ENCODE measurements at regions of chr6 and their contacts with region 1.

Region 1: GRCh38 chr6:110815217-110816109 is at the start of gene CDK19:
- DNase-seq: peak; percentile 97
- ATAC-seq: peak; percentile 92
- H3K4me3 ChIP-seq: peak within 1 kb of the TSS; percentile 65 to 94 (median 82)
- H3K27ac ChIP-seq: peak within 1 kb of the TSS; percentile 89 to 95 (median 91)
- H3K4me1 ChIP-seq: peaks cover 6 to 13% of the 10 kb centered on the region in 2 donors
- H3K27me3 ChIP-seq: no peaks in the 10 kb centered on the region
- CTCF ChIP-seq: no peak
- POLR2A ChIP-seq: peak; percentile 72 to 75
- total RNA-seq, gene CDK19: 3.0 to 7.4 (median 6.3) TPM

Region 2: DNA sequence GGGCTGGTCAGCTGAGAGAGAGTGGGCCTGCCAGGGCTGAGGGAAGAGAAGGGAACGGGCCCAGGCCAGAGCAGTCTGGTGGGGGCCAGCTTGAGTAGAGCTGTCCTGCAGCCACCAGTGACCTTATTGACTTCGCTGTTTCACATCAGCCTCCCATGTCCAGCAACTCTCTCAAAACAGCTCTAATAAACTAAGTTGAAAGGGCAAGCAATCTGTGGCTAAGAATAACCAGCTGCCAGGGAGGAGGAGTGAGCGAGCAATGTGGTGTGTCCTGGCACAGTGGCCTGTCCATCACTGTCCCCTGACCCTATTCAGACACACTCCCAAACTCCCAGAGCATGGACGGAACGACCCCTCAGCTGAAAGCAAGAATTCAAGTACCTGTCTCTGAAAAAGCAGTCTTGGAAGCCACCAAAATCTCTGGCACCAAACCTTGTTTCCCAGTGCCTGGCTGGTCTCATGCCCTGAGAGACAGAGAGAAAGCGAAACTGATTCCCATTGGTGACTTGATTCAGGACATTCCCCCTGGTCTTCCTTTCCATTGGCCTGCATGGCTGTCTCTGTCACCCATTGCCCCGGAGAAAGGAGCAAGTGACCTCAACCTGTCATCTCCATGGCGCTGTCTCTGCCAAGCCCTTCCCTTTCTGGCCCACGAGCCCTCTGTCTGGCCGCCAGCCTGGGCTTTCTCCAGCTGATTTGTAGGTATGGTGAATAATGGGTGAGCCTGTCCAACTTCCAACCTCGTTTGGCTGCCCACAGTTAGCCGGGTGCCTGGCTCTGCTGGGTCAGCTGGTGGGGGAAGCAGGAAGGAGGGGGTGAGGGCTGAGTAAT is 400.2 kb before region 1 on chr6 and contains the start of gene DDO:
- in situ Hi-C with region 1: no loop called
- intact Hi-C with region 1: loop called (anchors 1 kb)
- DNase-seq: peak; percentile 82 to 96
- ATAC-seq: peak; percentile 98 to 99
- H3K4me3 ChIP-seq: peak within 1 kb of the TSS; percentile 55 to 73 (median 66)
- H3K27ac ChIP-seq: peak within 1 kb of the TSS; percentile 83 to 93 (median 92)
- H3K4me1 ChIP-seq: peaks cover 14 to 16% of the 10 kb centered on the region in 2 donors
- H3K27me3 ChIP-seq: no peaks in the 10 kb centered on the region
- CTCF ChIP-seq: no peak
- POLR2A ChIP-seq: no peak
- total RNA-seq, gene DDO: 1.8 to 3.5 (median 2.4) TPM

Region 3: GRCh38 chr6:110873981-110874879 is 58.8 kb after region 1 on chr6 and contains the start of gene AMD1:
- in situ Hi-C with region 1: loop called in 2 of 4 experiments (anchors 10 kb)
- intact Hi-C with region 1: loop called (anchors 1 kb)
- DNase-seq: peak; percentile 98
- ATAC-seq: peak; percentile 71 to 79
- H3K4me3 ChIP-seq: peak within 1 kb of the TSS; percentile 79 to 94 (median 87)
- H3K27ac ChIP-seq: peak within 1 kb of the TSS; percentile 92 to 97 (median 96)
- H3K4me1 ChIP-seq: peaks cover 24 to 29% of the 10 kb centered on the region in 2 donors
- H3K27me3 ChIP-seq: no peaks in the 10 kb centered on the region
- CTCF ChIP-seq: no peak
- POLR2A ChIP-seq: peak; percentile 99
- total RNA-seq, gene AMD1: 33.5 to 57.1 (median 45.1) TPM

Region 4: GRCh38 chr6:110958329-110959192 is 143.1 kb after region 1 on chr6 and contains the start of gene GTF3C6:
- in situ Hi-C with region 1: loop called in 2 of 4 experiments (anchors 10 kb)
- intact Hi-C with region 1: loop called (anchors 2 kb)
- DNase-seq: peak; percentile 88 to 89
- ATAC-seq: peak; percentile 97 to 99
- H3K4me3 ChIP-seq: peak within 1 kb of the TSS; percentile 81 to 98 (median 92)
- H3K27ac ChIP-seq: peak within 1 kb of the TSS; percentile 89 to 91 (median 90)
- H3K4me1 ChIP-seq: peaks cover 11 to 12% of the 10 kb centered on the region in 2 donors
- H3K27me3 ChIP-seq: no peaks in the 10 kb centered on the region
- CTCF ChIP-seq: no peak
- POLR2A ChIP-seq: peak; percentile 35 to 41
- total RNA-seq, gene GTF3C6: 76.7 to 105 (median 82.4) TPM

Region 5: DNA sequence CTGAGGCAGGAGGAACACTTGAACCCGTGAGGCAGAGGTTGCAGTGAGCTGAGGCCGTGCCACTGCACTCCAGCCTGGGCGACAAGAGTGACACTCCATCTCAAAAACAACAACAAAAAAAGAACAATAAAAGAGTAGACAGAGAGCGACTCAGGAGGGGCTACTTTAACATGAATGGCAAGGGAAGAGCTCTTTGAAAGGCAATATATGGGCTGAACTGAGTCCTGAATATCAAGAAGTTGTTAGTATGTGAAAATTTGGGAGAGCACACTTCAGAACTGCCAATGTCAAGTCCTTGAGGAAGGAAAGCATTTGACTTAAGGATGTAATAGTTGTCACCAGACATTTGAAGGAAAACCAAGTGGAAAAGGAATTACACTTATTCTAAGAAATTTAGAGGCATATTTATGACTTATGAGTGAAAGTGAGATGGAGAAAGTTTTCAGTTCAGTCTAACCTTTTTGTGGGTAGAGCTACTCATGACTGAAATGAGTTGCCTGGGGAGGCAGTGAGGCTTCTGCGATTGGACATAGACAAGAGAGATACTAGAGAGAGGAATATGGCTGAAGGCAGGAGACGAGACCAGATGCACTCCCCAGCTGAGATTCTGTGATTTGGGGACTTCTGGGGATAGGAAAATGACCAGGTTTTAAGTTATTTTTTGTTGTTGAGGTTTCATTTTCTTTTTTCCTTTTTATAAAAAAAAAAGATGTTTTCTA is 223.2 kb after region 1 on chr6:
- in situ Hi-C with region 1: no loop called
- intact Hi-C with region 1: no loop called
- DNase-seq: no peak
- ATAC-seq: no peak
- H3K4me3 ChIP-seq: no peak overlapping the region
- H3K27ac ChIP-seq: no peak overlapping the region
- H3K4me1 ChIP-seq: peaks cover 0 to under 1% of the 10 kb centered on the region in 2 donors
- H3K27me3 ChIP-seq: no peaks in the 10 kb centered on the region
- CTCF ChIP-seq: no peak
- POLR2A ChIP-seq: no peak

Region 6: GRCh38 chr6:111353912-111354462 is 538.5 kb after region 1 on chr6:
- in situ Hi-C with region 1: no loop called
- intact Hi-C with region 1: no loop called
- DNase-seq: no peak
- ATAC-seq: peak in 1 of 2 donors; percentile 39
- H3K4me3 ChIP-seq: no peak overlapping the region
- H3K27ac ChIP-seq: peak overlapping the region in 2 of 4 donors; percentile 14 to 25
- H3K4me1 ChIP-seq: peaks cover 6 to 11% of the 10 kb centered on the region in 2 donors
- H3K27me3 ChIP-seq: no peaks in the 10 kb centered on the region
- CTCF ChIP-seq: no peak
- POLR2A ChIP-seq: no peak

Region 7: DNA sequence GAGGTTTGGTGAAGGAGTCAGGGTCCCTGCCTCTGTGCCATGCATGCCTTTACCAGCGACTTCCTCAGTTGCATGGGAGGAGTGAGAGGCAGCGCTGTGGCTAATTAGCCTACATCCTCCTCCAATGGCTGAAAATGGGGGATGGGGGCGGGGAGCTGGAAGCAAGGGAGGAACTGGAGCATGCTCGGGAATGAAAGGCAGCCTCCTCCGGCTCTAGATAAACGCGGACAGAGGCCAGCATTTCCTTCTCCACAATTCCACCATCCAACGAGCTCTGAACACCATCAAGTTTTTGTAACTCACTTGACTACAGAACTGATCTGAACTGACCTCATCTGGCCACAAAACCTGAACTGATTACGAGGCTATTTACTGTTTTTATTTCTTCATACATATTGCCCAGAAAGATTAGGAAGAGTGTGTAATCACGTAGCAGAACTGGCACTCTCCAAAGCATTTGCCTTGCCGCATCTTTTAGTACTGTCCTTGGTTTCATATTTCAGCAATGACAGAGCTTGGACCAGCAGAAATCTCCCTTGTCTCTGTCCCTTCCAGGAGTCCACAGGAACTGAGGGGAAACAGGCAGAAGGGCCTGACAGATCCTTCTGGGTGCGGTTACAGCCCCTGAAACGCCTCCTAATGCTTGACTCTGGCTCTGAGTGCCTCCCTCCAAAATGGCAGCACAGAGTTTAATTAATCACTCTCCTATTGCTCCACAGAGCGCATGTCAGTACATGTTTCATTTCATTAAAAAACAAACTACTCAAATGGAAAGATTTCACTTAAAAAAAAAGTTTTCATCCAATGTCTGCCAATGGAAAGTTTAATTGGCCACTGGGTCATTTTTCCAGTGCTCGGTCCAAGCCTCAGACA is 848.5 kb after region 1 on chr6:
- in situ Hi-C with region 1: no loop called
- intact Hi-C with region 1: loop called (anchors 10 kb)
- DNase-seq: peak; percentile 56 to 77
- ATAC-seq: peak; percentile 63 to 64
- H3K4me3 ChIP-seq: peak overlapping the region; percentile 12 to 52 (median 22)
- H3K27ac ChIP-seq: peak overlapping the region; percentile 88 to 96 (median 95)
- H3K4me1 ChIP-seq: peaks cover 78 to 83% of the 10 kb centered on the region in 2 donors
- H3K27me3 ChIP-seq: no peaks in the 10 kb centered on the region
- CTCF ChIP-seq: peak in 1 of 5 experiments; percentile 6
- POLR2A ChIP-seq: peak; percentile 11 to 59

Measured in gastrocnemius medialis (tissue), 4 donors.